Colonic mucosa (tissue), 4 donors: ENCODE measurements at regions of chr18 and their contacts with region 1.

Region 1: GRCh38 chr18:35352778-35353177 is 8.6 kb upstream of the ZNF24 start:
- DNase-seq: no peak
- H3K4me3 ChIP-seq: no peak overlapping the region
- H3K27ac ChIP-seq: no peak overlapping the region
- H3K4me1 ChIP-seq: no peaks in the 10 kb centered on the region
- H3K27me3 ChIP-seq: no peaks in the 10 kb centered on the region
- CTCF ChIP-seq: no peak

Region 2: DNA sequence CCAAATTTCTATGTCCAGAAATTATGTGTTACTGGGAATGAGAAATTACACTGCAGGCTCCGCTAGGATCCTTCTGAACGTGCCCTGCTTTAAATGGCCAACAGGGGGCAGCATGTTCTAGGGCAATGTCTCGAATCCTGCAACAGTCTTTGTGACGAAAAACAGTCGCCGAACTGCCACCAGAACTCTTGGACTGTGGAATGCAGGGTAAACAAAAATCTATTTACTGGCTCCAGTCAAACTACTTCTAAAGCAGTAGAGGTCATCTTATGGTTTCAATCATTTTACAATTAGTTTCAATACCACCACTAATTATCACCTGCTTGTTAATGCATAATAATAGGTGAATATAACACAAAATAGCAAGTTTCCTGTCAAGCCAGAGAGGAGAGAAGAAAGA is 121.7 kb before region 1 on chr18:
- intact Hi-C with region 1: loop called (anchors 5 kb)
- DNase-seq: peak; percentile 85
- H3K4me3 ChIP-seq: no peak overlapping the region
- H3K27ac ChIP-seq: no peak overlapping the region
- H3K4me1 ChIP-seq: no peaks in the 10 kb centered on the region
- H3K27me3 ChIP-seq: no peaks in the 10 kb centered on the region
- CTCF ChIP-seq: peak; percentile 95

Region 3: DNA sequence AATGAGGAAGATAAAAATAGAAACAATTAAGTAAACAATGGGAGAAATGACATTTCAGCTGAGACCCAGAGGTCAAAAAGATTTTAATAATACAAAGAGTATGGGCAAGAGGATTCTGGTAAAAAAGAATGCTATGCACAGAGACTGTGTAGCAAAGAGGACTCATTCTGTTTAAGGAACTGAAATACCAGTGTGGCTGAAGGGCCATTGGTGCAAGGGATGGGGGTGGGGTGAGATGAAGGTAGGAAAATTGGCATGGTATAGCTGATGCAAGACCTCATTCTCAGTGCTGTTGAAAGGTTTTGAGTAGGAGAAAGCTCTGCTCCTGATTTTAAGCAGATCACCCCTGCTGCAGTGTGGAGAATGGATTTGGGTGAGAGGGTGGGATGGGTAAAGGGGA is 239.5 kb after region 1 on chr18:
- intact Hi-C with region 1: no loop called
- DNase-seq: no peak
- H3K4me3 ChIP-seq: no peak overlapping the region
- H3K27ac ChIP-seq: no peak overlapping the region
- H3K4me1 ChIP-seq: no peaks in the 10 kb centered on the region
- H3K27me3 ChIP-seq: no peaks in the 10 kb centered on the region
- CTCF ChIP-seq: no peak

Region 4: DNA sequence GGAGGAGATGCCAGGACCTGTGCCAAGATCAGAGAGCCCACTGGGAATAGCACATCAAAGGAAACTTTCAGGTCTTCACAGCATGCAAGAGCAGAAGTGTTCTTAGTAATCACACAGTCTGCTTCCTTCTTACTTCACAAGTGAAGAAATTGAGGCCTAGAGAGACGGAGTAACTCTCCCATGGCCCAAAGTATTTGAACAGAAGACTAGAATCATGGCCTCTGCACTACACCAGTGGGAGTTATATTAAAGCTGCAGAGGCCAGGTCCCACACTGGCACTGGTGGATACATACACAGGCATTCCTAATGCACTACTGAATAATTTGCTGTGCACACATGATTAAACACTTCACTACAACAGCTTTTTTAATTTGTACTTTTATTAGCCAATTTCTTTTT is 512.1 kb after region 1 on chr18:
- intact Hi-C with region 1: no loop called
- DNase-seq: no peak
- H3K4me3 ChIP-seq: no peak overlapping the region
- H3K27ac ChIP-seq: no peak overlapping the region
- H3K4me1 ChIP-seq: no peaks in the 10 kb centered on the region
- H3K27me3 ChIP-seq: no peaks in the 10 kb centered on the region
- CTCF ChIP-seq: no peak